Activated CD4-positive, alpha-beta T cell treated with anti-CD3 and anti-CD28 coated beads for 36 hours (primary cell): ENCODE measurements at regions of chr6 and their contacts with region 1.

Region 1: DNA sequence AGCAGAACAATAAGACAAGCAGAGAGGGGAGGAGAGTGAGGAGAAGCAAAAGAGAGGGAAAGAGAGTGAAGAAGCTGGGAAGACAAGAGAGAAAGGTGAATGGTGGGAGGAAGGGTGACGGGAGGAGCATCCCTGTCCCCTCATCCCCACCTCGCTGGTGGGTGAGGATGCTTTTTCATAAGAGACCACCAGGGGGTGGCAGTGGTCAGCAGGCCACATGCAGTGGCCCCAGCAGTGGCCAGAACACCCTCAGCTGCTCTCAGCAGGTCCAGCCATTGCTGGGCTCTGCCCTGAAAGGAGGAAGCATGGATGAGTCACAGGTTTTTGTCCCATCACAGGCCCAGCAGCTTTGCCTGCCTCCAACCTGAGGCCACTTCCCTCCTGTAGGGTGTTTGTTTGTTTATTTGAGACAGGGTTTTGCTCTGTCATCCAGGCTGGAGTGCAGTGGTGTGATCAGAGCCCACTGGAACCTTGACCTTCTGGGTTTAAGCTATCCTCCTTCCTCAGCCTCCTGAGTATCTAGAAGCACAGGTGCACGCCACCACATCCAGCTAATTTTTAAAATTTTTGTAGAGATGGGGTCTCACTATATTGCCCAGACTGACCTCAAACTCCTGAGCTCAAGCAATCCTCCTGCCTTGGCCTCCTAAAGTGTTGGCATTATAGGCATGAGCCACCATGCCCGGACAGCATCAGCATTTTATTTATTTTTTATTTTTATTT is 24.0 kb downstream of the FGD2 start:
- DNase-seq: peak; percentile 68
- ATAC-seq: peak; percentile 17
- H3K4me3 Mint-ChIP-seq: no peak overlapping the region
- H3K27ac Mint-ChIP-seq: peak overlapping the region; percentile 60
- H3K4me1 Mint-ChIP-seq: peaks cover 54% of the 10 kb centered on the region
- H3K27me3 Mint-ChIP-seq: no peaks in the 10 kb centered on the region

Region 2: GRCh38 chr6:36929607-36930006 is 99.8 kb before region 1 on chr6:
- CTCF ChIA-PET with region 1: no interaction called
- POLR2A ChIA-PET with region 1: no interaction called
- intact Hi-C with region 1: no loop called
- DNase-seq: no peak
- ATAC-seq: no peak
- H3K4me3 Mint-ChIP-seq: no peak overlapping the region
- H3K27ac Mint-ChIP-seq: no peak overlapping the region
- H3K4me1 Mint-ChIP-seq: peaks cover 18% of the 10 kb centered on the region
- H3K27me3 Mint-ChIP-seq: no peaks in the 10 kb centered on the region

Region 3: GRCh38 chr6:37051138-37052026 is 22.0 kb after region 1 on chr6:
- CTCF ChIA-PET with region 1: interaction called, 128 read pairs
- POLR2A ChIA-PET with region 1: interaction called, 7 read pairs
- intact Hi-C with region 1: loop called (anchors 1 kb)
- DNase-seq: peak; percentile 95
- ATAC-seq: peak; percentile 43
- H3K4me3 Mint-ChIP-seq: peak overlapping the region; percentile 79
- H3K27ac Mint-ChIP-seq: peak overlapping the region; percentile 100
- H3K4me1 Mint-ChIP-seq: peaks cover 55% of the 10 kb centered on the region
- H3K27me3 Mint-ChIP-seq: no peaks in the 10 kb centered on the region

Region 4: DNA sequence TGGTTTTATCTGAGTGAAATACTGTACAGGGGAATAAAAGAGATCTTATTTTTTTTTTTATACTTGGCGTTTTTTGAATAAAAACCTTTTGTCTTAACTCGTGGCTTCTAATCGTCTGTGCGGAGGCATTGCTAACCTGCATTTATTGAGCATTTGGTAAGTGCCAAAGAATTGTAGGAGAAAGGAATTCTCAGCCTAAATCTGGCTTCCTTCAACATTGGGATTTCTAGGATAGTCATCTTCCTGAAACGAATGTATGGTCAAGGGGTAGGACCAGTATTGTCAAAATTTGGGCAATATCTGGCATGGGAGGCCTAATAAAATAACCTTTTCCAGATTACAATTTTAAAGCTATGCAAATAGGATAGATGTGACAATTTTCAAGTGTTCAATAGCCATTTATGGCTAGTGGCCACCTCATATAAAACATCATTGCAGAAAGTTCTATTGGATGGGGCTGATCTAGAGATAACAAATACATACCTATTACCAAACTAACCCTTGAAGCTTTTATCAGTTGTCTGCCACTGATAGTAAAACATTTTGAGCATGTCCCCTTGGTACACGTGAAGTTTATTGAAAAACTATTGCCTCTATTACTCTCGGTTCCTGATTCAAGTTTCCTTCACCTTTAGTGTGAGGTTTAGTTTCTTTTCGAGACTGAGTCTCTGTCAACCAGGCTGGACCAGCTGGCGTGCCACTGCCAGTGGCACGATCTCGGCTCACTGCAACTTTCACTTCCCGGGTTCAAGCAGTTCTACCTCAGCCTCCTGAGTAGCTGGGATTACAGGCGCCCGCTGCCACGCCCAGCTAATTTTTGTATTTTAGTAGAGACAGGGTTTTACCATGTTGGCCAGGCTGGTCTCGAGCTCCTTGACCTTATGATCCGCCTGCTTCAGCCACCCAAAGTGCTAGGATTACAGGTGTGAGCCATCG is 146.2 kb after region 1 on chr6:
- CTCF ChIA-PET with region 1: interaction called, 271 read pairs
- POLR2A ChIA-PET with region 1: interaction called, 6 read pairs
- intact Hi-C with region 1: loop called in 1 of 2 experiments (anchors 1 kb)
- DNase-seq: peak; percentile 30
- ATAC-seq: no peak
- H3K4me3 Mint-ChIP-seq: peak overlapping the region; percentile 91
- H3K27ac Mint-ChIP-seq: peak overlapping the region; percentile 96
- H3K4me1 Mint-ChIP-seq: peaks cover 51% of the 10 kb centered on the region
- H3K27me3 Mint-ChIP-seq: no peaks in the 10 kb centered on the region

Region 5: DNA sequence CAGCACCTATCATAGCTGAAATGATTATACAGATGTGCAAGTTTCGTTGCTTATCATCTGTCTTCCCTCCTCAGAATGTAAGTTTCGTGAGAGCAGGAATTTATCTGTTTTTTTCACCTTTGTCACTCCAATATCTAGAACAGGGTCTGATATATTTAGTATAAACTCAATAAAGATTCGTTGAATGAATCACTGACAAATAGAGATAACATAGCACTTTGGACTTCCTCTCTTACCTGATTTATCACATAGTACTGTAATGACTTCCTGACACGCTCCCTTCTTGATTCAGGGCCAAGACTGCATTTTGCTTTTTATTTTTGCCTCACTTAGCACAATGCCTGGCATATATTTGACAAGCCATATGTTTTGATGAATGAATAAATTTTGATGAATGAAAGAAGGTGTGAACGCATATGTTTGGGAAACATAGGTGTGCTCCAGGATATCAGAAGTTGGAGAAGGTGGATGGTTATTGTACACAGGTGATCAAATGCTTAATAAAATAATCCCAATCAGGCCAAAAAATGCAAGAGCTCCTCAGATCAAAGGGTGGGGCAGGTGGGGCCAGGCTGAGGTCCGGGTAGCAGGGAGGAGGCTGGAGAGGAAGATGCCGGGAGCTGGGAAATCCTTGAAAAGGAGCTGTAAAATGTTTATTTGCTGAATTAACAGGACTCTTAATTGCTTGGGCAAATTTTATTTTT is 173.5 kb after region 1 on chr6:
- CTCF ChIA-PET with region 1: interaction called, 586 read pairs
- POLR2A ChIA-PET with region 1: no interaction called
- intact Hi-C with region 1: loop called in 1 of 2 experiments (anchors 1 kb)
- DNase-seq: no peak
- ATAC-seq: peak; percentile 68
- H3K4me3 Mint-ChIP-seq: no peak overlapping the region
- H3K27ac Mint-ChIP-seq: peak overlapping the region; percentile 39
- H3K4me1 Mint-ChIP-seq: peaks cover 59% of the 10 kb centered on the region
- H3K27me3 Mint-ChIP-seq: no peaks in the 10 kb centered on the region

Region 6: GRCh38 chr6:37432916-37433656 is 403.7 kb after region 1 on chr6 and contains the start of gene CMTR1:
- CTCF ChIA-PET with region 1: no interaction called
- POLR2A ChIA-PET with region 1: no interaction called
- intact Hi-C with region 1: loop called in 1 of 2 experiments (anchors 10 kb)
- DNase-seq: peak; percentile 98
- ATAC-seq: peak; percentile 88
- H3K4me3 Mint-ChIP-seq: peak within 1 kb of the TSS; percentile 98
- H3K27ac Mint-ChIP-seq: peak within 1 kb of the TSS; percentile 99
- H3K4me1 Mint-ChIP-seq: peaks cover 36% of the 10 kb centered on the region
- H3K27me3 Mint-ChIP-seq: peaks cover 4% of the 10 kb centered on the region
- total RNA-seq, gene CMTR1: 65.3 to 74.6 TPM